T-cell (primary cell): ENCODE measurements at regions of chr3 and their contacts with region 1.

Region 1: GRCh38 chr3:68977486-68978167 is 35.9 kb downstream of the EOGT start:
- DNase-seq: no peak
- ATAC-seq: no peak
- H3K4me3 ChIP-seq: no peak overlapping the region
- H3K4me3 Mint-ChIP-seq: no peak overlapping the region
- H3K27ac ChIP-seq: no peak overlapping the region
- H3K27ac Mint-ChIP-seq: no peak overlapping the region
- H3K4me1 ChIP-seq: no peaks in the 10 kb centered on the region
- H3K4me1 Mint-ChIP-seq: no peaks in the 10 kb centered on the region
- H3K27me3 ChIP-seq: no peaks in the 10 kb centered on the region
- H3K27me3 Mint-ChIP-seq: peaks cover 0 to 2% of the 10 kb centered on the region in 2 donors

Region 2: DNA sequence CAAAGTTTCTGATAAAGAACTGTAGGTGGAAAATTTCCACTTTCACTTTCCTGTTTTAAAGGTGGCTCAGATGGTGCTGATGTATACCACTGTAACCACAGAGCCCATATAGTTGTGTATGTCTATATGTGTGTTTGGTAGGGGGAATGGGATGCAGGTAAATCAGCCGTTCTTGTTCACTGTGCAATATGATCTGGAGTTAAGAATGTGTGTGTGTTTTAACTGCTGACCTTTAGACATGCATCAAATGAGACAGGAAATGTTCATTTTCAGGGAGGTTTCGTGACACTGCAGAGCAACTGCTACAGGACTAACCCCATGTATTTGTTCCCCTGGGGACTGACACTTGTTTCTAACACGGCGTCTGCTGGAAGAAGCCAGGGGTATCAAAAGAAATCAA is 225.7 kb before region 1 on chr3:
- CTCF ChIA-PET with region 1: no interaction called
- POLR2A ChIA-PET with region 1: no interaction called
- DNase-seq: no peak
- ATAC-seq: no peak
- H3K4me3 ChIP-seq: no peak overlapping the region
- H3K4me3 Mint-ChIP-seq: no peak overlapping the region
- H3K27ac ChIP-seq: no peak overlapping the region
- H3K27ac Mint-ChIP-seq: no peak overlapping the region
- H3K4me1 ChIP-seq: peaks cover 0 to 3% of the 10 kb centered on the region in 2 experiments
- H3K4me1 Mint-ChIP-seq: peaks cover 0 to 8% (median 6%) of the 10 kb centered on the region in 3 donors
- H3K27me3 ChIP-seq: no peaks in the 10 kb centered on the region
- H3K27me3 Mint-ChIP-seq: peaks cover 0 to 9% of the 10 kb centered on the region in 2 donors

Region 3: GRCh38 chr3:68988740-68989139 is 11.1 kb after region 1 on chr3:
- CTCF ChIA-PET with region 1: no interaction called
- POLR2A ChIA-PET with region 1: interaction called in 1 of 2 experiments, 13 read pairs
- DNase-seq: no peak
- ATAC-seq: no peak
- H3K4me3 ChIP-seq: no peak overlapping the region
- H3K4me3 Mint-ChIP-seq: no peak overlapping the region
- H3K27ac ChIP-seq: no peak overlapping the region
- H3K27ac Mint-ChIP-seq: no peak overlapping the region
- H3K4me1 ChIP-seq: no peaks in the 10 kb centered on the region
- H3K4me1 Mint-ChIP-seq: no peaks in the 10 kb centered on the region
- H3K27me3 ChIP-seq: no peaks in the 10 kb centered on the region
- H3K27me3 Mint-ChIP-seq: no peaks in the 10 kb centered on the region